Astrocyte of the cerebellum (primary cell): ENCODE measurements at regions of chr6 and their contacts with region 1.

Region 1: DNA sequence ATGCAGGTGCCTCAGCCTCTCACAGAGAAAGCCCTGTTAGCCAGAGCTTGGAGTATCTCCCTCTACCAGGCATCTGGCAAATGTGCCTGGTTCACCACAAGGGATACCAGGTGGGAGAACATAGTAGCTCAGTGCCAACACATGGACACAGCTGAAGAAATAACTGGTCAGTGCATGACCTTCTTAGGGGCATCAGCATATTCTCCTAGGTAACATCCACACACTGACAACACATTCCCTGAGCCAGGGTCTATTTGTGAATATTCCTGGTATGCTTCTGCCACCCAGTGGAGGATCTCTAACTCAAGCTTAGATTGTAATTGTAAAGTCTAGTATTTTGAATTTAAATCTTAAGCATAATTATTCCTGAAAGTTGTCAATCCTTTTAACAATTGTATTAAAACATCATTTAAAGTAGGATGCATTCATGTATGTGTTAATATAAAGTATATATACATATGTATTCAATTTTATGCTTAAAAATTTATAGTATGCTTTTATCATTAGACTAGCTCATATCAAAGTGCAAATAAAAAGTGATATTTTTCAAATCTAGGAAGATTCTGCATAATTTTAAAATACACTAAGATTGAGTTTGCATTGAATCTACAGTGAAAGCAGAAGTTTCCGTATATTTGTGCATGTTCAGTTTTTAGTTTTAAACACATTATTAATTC is 45.3 kb upstream of the COL21A1 start:
- DNase-seq: peak; percentile 62
- H3K4me3 ChIP-seq: no peak overlapping the region
- CTCF ChIP-seq: peak; percentile 50

Region 2: GRCh38 chr6:55980627-55981211 is 311.9 kb before region 1 on chr6:
- in situ Hi-C with region 1: loop called (anchors 5 kb)
- DNase-seq: peak; percentile 35
- H3K4me3 ChIP-seq: no peak overlapping the region
- CTCF ChIP-seq: peak; percentile 50

Region 3: GRCh38 chr6:56079751-56080540 is 212.7 kb before region 1 on chr6:
- in situ Hi-C with region 1: no loop called
- DNase-seq: peak; percentile 54
- H3K4me3 ChIP-seq: no peak overlapping the region
- CTCF ChIP-seq: no peak